Endothelial cell of umbilical vein (primary cell): ENCODE measurements at regions of chr11 and their contacts with region 1.

Region 1: DNA sequence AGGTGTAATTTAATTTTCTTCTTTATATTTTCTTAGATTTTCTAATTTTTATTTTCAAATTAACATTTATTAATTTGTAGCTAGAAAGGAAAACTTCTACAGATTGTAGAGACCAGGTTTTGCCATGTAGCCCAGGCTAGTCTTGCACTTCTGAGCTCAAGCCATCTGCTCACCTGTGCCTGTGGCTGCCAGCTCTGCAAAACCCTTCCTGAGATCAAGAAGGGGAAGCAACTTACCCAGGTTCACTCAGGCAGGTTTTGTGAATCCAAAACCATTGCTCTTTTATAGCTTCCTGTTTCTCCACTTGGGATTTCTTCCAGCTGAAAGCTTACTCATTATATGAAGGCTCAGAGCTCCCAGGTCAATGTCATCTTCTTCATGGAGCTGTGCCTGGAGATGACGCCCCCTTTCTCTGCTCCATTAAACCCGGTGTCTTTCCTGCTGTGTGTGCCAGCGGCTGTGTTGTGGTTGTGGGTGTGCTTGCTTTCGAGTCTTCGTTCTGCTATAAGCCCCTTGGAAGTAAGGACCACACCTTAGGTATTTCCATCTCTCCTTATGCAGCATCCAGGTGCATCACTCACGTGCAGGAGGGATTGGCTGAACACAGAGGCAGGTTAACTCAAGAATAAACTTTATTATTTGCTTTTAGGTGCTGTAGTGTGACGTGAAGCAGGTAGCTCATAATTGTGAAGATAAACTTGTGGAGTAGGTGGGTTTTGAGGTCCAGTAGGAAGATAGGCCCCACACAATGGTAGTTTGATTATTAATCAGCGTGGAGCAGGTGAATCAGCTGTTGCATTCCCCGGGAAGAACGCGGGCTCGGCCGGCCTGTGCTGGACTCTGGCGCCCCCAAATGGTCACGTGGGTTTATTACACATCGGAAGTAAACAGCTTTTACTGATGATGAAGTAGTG is 42.2 kb upstream of the INCENP start:
- DNase-seq: peak; percentile 74
- H3K4me3 ChIP-seq: no peak overlapping the region
- H3K27ac ChIP-seq: no peak overlapping the region
- H3K4me1 ChIP-seq: no peaks in the 10 kb centered on the region
- H3K27me3 ChIP-seq: no peaks in the 10 kb centered on the region
- CTCF ChIP-seq: peak; percentile 79 to 87
- POLR2A ChIP-seq: no peak

Region 2: DNA sequence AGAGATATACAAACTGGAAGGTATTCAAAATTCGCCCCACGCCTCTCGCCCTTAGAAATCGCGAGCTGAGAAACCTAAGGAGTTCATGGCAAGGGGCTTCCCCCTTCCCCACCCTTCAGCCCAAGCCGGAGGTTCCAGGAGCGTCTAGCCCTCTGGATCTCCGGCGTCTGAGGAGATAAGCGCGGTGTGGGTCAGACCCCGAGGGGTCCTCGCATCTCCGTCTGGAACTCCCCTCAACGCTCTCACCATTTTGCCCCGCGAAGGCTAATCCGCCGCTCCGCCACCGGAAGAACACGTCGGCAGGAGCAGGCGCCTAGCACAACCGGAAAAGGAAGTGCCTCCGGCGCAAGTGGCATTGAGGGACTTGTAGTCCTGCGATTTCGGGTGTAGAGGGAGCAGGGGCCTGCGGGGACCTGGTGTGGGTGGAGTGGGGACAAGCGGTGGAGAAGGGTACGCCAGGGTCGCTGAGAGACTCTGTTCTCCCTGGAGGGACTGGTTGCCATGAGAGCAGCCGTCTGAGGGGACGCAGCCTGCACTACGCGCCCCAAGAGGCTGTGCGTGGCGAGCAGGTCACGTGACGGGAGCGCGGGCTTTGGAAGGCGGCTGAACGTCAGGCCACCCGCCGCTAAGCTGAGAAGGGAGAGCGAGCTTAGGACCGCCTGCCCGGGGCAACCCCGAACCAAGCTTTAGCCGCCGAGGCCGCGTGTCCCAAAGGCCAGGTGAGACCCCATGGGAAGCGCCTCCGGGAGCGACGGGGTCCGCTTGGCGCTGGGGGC is 289.1 kb before region 1 on chr11 and contains the starts of genes FEN1 and TMEM258:
- CTCF ChIA-PET with region 1: interaction called, 68 read pairs
- POLR2A ChIA-PET with region 1: no interaction called
- dilution Hi-C with region 1: no loop called
- intact Hi-C with region 1: no loop called
- DNase-seq: peak; percentile 98
- H3K4me3 ChIP-seq: peak within 1 kb of the TSS; percentile 70 to 91 (median 83)
- H3K27ac ChIP-seq: peak within 1 kb of the TSS; percentile 99
- H3K4me1 ChIP-seq: peaks cover 18% of the 10 kb centered on the region
- H3K27me3 ChIP-seq: no peaks in the 10 kb centered on the region
- CTCF ChIP-seq: peak in 1 of 2 donors; percentile 3
- POLR2A ChIP-seq: peak; percentile 90
- total RNA-seq, gene FEN1: 57.9 and 60.5 TPM in 2 replicates
- total RNA-seq, gene TMEM258: 139 and 140 TPM in 2 replicates

Region 3: DNA sequence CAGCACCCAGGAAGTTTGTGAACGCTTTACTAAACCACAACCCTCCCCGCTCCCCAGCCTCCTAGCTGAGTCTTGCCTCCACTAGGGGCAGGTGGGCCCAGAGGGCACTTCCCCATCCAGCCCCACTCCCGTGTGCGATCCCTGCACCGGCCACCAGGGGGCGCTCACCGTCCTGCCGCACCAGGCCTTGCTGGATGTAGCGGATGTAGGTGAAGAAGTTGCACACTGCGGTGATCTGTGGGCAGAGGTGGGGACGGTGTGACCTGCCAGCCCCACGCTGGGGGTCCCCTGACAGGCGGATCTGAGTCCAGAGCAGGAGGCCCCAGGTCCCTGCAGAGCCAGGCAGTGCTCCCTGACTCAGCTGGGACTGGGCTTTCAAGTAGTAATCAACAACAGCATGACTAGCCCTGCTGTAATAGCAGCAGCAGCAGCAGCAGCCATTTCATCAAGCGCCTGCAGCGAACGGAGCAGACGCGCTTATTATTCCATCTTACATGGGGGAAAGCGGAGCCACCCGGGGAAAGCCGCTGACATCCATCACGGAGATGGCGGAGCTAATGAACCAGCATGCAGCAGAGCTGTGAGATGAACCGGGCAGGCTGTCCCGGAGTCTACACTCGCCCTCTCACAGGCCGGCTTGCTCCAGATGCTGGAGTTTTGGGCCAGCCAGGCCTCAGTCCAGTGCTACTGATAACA is 182.3 kb before region 1 on chr11:
- CTCF ChIA-PET with region 1: interaction called, 416 read pairs
- POLR2A ChIA-PET with region 1: no interaction called
- dilution Hi-C with region 1: no loop called
- intact Hi-C with region 1: loop called (anchors 1 kb)
- DNase-seq: peak; percentile 80
- H3K4me3 ChIP-seq: no peak overlapping the region
- H3K27ac ChIP-seq: no peak overlapping the region
- H3K4me1 ChIP-seq: no peaks in the 10 kb centered on the region
- H3K27me3 ChIP-seq: no peaks in the 10 kb centered on the region
- CTCF ChIP-seq: peak; percentile 100
- POLR2A ChIP-seq: no peak

Region 4: DNA sequence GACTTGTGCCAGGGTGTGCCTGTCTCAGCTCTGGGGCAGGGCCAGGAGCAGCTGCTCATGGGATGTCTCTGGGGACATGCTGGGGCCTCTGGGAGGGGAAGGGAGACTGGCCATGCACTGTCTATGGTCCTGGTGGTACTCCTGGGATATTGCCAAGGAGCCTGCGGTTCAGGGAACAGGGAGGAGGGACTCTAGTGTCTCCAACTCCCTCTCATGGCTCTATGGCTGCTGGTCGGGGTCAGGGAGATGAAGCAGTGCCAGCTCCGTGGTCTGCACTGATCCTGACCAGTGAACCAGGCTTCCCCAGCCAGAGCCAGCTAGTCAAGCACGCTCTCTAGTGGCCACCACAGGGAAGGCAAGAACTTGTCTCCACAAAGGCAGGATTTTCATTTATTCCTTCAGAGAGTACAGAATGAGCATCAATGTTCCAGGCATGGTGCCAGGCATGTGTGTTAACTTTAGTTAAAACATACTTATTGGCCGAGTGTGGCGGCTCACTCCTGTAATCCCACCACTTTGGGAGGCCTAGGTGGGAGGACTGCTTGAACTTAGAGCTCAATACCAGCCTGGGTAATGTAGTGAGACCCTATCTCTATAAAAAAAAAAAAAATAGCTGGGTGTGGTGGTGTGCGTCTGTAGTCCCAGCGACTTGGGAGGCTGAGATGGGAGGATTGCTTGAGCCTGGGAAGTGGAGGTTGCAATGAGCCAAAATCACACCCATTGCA is 134.0 kb before region 1 on chr11:
- CTCF ChIA-PET with region 1: interaction called, 254 read pairs
- POLR2A ChIA-PET with region 1: no interaction called
- dilution Hi-C with region 1: no loop called
- intact Hi-C with region 1: loop called (anchors 1 kb)
- DNase-seq: peak; percentile 84
- H3K4me3 ChIP-seq: no peak overlapping the region
- H3K27ac ChIP-seq: no peak overlapping the region
- H3K4me1 ChIP-seq: no peaks in the 10 kb centered on the region
- H3K27me3 ChIP-seq: peaks cover 2% of the 10 kb centered on the region in 2 experiments
- CTCF ChIP-seq: peak; percentile 92 to 94
- POLR2A ChIP-seq: no peak

Region 5: DNA sequence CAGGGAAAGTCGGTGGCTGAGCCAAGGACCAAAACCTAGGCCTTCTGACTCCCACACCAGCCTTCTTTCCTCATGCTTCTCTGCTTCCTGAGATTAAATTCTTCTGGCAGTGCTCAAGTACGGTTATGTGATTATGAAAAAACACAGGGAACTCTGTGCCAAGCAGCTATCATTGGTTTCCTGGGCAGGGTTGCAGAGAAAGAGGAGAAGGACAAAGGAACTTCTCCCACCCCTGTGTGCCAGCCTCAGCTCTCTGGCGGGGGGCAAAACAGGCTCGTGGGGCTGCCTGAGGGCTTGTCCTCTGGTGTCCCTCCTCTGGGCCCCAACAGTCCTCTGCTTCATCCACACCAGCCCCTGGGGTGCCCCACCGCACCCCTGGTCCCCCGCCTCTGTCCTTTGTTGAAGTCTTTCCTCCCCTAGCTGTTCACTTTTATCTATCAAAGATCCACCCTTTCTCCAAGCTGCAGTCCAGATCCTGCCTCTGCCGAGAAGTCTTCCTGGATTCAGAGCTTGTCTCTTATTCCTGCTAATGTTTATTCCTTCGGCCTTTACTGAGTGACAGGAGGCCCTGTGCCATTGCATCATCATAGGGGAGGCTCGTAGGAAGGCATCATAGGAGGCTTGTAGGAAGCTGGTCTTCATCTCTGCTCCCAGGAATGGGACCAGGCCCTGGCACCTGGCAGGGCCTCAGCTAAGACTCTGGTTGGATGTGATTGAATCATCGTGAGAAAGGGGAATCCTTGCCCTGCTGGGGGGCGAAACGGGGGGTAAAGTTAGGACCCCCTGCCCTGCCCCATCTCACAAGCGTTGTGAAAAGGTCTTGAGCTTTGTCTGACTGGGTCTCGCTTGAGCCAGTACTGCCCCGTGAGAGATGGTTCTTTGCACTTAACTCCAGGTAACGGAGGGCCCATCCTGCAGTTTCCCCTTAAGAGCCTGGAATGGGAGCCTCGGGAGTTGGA is 102.7 kb before region 1 on chr11:
- CTCF ChIA-PET with region 1: interaction called, 63 read pairs
- POLR2A ChIA-PET with region 1: no interaction called
- dilution Hi-C with region 1: no loop called
- intact Hi-C with region 1: no loop called
- DNase-seq: peak; percentile 87
- H3K4me3 ChIP-seq: no peak overlapping the region
- H3K27ac ChIP-seq: peak overlapping the region; percentile 55
- H3K4me1 ChIP-seq: peaks cover 22% of the 10 kb centered on the region
- H3K27me3 ChIP-seq: no peaks in the 10 kb centered on the region
- CTCF ChIP-seq: no peak
- POLR2A ChIP-seq: no peak

Region 6: DNA sequence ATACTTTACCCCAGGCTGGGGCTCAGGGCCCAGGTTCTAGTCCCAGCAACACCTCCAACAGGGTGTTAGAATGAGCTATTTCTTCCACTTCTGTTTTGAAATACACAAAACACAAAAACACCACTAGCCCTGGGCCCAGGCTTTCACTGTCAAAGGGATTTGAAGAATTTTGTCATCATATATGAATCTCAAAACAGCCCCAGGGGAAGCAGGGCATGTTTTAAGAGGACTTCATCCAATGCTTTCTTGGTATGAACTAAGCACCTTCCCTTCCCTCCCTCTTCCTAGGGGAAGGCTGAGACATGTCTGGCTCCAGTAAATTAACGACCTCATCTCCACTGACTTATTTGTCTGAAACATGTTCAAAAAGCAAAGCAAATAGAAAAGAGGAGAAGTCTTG is 33.6 kb before region 1 on chr11:
- CTCF ChIA-PET with region 1: interaction called, 13 read pairs
- POLR2A ChIA-PET with region 1: no interaction called
- dilution Hi-C with region 1: no loop called
- intact Hi-C with region 1: no loop called
- DNase-seq: no peak
- H3K4me3 ChIP-seq: no peak overlapping the region
- H3K27ac ChIP-seq: no peak overlapping the region
- H3K4me1 ChIP-seq: no peaks in the 10 kb centered on the region
- H3K27me3 ChIP-seq: peaks cover 13 to 16% of the 10 kb centered on the region in 2 experiments
- CTCF ChIP-seq: no peak
- POLR2A ChIP-seq: no peak

Region 7: DNA sequence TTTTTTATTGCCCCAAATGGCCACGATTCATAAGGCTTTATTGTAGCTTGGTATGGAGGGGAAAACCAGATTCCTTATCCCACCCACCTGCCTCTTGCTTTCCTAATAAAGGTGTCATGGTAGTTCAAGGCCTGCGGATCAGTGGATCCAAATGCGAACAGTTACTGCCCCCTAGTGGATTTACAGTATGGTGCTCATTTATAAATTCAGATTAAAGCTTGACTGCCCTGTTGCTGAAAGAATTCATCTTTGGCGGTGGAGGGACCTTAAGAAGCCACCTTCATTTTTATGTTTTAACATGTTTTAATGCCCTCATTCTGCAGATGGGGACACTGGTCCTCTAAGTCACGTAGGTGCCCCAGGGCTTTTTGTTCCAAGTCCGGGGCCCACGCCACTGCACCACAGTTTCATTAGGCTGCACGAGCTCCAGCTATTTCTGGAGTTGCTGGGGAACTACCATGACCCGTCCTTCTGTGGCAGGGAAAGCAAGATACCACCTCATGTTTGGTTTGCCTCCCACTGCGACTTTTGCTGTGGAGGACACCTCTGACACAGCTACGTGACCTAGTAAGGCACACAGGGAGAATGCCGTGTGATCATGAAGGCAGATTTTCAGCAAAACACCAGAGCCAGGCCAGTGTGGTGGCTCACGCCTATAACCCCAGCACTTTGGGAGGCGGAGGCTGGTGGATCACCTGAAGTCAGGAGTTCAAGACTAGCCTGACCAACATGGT is 26.5 kb after region 1 on chr11:
- CTCF ChIA-PET with region 1: interaction called, 79 read pairs
- POLR2A ChIA-PET with region 1: no interaction called
- dilution Hi-C with region 1: no loop called
- intact Hi-C with region 1: no loop called
- DNase-seq: peak; percentile 68
- H3K4me3 ChIP-seq: no peak overlapping the region
- H3K27ac ChIP-seq: no peak overlapping the region
- H3K4me1 ChIP-seq: peaks cover 9% of the 10 kb centered on the region
- H3K27me3 ChIP-seq: no peaks in the 10 kb centered on the region
- CTCF ChIP-seq: peak; percentile 56 to 66
- POLR2A ChIP-seq: no peak